ENCODE measurements at regions of chr10 and their contacts with region 1.

Region 1: GRCh38 chr10:68156373-68157185 is 47.3 kb downstream of the MYPN start:
- DNase-seq: peak in 4 of 10 donors; percentile 28 to 64 (median 42)

Region 2: DNA sequence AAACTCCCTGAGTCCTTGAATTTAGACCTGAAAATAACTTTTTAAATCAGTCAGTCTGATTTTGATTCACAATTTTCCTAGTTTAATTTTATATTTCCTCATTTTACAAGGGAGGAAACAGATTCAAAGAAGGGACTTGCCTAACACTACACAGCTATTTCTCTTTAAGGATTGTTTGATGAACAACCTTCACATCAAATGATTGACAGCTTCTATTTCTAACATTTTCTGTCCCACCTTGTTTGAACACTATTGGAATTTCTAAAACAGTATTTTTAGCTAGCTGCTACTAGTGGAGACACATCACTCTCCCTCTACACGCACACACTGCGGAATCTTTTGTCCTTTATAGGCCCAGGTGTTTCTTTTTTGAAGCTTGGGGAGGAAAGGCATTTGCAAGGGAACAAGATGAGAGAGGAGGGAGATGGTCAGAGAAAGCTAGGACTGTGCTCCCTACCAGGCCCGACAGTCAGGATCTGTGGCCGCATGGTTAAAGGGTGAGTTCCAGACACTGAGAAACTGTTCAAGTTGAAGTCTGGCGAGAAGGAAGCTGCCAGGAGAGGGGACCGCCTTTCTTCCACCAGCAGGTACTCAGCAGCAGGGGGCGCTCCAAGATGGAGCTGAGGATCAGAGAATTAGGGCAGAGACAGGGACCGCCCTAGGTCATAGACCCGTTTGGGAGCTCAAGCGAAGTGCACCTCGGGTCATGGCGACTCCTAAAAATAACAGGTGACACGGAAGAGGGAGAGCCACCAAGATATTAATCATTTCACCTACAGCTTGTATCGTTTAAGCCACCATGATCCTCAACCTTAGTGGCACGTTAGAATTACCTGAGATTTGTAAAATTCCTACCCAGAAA is 368.3 kb before region 1 on chr10:
- intact Hi-C with region 1: loop called (anchors 5 kb)
- DNase-seq: peak in 5 of 10 donors; percentile 12 to 82 (median 49)

Region 3: DNA sequence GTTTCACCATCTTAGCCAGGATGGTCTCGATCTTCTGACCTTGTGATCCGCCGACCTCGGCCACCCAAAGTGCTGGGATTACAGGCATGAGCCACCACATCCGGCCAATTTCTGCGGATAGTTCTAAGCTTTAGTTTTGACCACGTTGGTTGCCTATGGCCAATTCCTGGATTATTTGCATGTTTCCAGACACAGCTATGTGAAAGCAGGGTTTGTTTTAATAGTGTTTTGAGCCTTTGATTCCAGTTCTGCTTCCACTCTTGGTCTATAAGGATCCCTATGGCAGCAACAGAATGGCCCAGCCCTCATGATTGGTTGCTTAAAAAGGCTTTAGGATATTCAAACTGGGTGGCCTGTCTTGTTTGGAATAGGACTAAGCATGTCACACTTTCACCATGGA is 253.0 kb before region 1 on chr10:
- intact Hi-C with region 1: no loop called
- DNase-seq: no peak

Region 4: DNA sequence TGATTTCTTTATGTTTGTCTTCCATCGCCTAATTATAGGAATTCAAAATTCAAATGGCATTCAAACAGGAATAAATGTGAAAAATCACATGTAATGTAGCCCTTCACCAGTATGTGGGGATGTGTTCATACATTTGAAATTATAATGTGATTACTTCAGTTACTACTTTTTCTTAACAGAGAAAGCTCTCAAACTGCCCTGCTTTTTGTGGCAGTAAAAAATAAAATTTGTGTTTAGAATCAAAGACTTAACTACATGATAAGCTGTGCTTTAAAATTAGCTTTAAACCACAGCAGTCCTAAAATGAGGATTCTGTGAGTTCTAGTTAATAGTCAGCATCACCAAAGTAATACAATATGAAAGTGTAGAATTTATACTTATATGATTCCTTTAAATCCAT is 73.7 kb before region 1 on chr10:
- intact Hi-C with region 1: loop called (anchors 5 kb)
- DNase-seq: no peak

Measured in posterior cingulate gyrus (tissue), 11 donors.